PC-9 (cell line): ENCODE measurements at regions of chr5 and their contacts with region 1.

Region 1: GRCh38 chr5:134063188-134063820 is 51.2 kb upstream of the TCF7 start:
- DNase-seq: no peak
- H3K4me3 ChIP-seq: no peak overlapping the region
- H3K27ac ChIP-seq: no peak overlapping the region
- H3K4me1 ChIP-seq: peaks cover 20% of the 10 kb centered on the region
- H3K27me3 ChIP-seq: no peaks in the 10 kb centered on the region
- CTCF ChIP-seq: no peak

Region 2: GRCh38 chr5:133602835-133603380 is 460.4 kb before region 1 on chr5:
- CTCF ChIA-PET with region 1: no interaction called
- POLR2A ChIA-PET with region 1: no interaction called
- intact Hi-C with region 1: no loop called
- DNase-seq: no peak
- H3K4me3 ChIP-seq: no peak overlapping the region
- H3K27ac ChIP-seq: no peak overlapping the region
- H3K4me1 ChIP-seq: no peaks in the 10 kb centered on the region
- H3K27me3 ChIP-seq: no peaks in the 10 kb centered on the region
- CTCF ChIP-seq: no peak

Region 3: DNA sequence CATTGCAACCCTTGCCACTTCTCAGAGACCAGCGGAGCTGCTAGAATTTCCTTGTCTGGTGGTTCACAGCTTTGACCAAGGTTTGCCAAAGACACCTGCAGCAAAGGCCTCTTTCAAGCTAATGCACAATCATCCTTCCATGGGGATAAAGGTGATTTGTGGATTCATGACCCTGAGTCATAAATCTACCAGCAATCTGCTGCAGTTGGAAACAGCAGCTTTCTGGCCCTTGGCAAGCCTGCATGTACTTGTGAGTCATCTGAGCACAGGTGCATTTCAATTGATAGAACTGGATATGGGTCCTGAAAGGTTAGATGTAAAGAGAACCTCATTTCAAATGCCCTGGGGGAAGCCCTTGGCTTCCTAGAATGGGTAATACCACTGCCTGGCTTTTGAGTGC is 29.6 kb after region 1 on chr5:
- CTCF ChIA-PET with region 1: no interaction called
- POLR2A ChIA-PET with region 1: no interaction called
- intact Hi-C with region 1: loop called (anchors 2 kb)
- DNase-seq: peak; percentile 70 to 99
- H3K4me3 ChIP-seq: peak overlapping the region; percentile 13; the same call in 1 of the 2 replicates
- H3K27ac ChIP-seq: peak overlapping the region; percentile 93
- H3K4me1 ChIP-seq: peaks cover 47% of the 10 kb centered on the region
- H3K27me3 ChIP-seq: no peaks in the 10 kb centered on the region
- CTCF ChIP-seq: no peak

Region 4: DNA sequence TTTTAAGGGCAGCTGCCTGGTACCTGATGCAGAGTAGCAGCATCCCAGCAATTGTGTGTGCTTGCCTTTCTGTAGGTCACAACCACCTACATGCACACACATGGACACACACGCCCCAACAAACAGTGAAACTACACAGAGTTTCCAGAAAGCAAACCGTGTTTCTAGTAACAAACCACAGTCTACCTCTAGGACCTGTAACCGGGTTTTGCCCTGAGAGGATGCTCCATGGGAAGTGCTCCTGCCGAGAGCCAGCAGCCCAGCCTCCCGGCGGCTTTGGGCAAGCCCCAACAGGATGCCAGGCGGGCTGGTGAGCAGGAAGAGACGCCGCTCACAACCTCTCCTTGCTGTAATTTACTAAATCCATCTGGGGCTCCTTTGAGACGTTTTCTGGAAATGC is 47.1 kb after region 1 on chr5:
- CTCF ChIA-PET with region 1: no interaction called
- POLR2A ChIA-PET with region 1: no interaction called
- intact Hi-C with region 1: no loop called
- DNase-seq: no peak
- H3K4me3 ChIP-seq: no peak overlapping the region
- H3K27ac ChIP-seq: no peak overlapping the region
- H3K4me1 ChIP-seq: 0 out of 2 replicates have a peak, but pooled peaks cover 6% of the 10 kb centered on the region
- H3K27me3 ChIP-seq: no peaks in the 10 kb centered on the region
- CTCF ChIP-seq: no peak

Region 5: GRCh38 chr5:134411546-134412266 is 348.4 kb after region 1 on chr5 and contains the start of gene CDKN2AIPNL:
- CTCF ChIA-PET with region 1: no interaction called
- POLR2A ChIA-PET with region 1: no interaction called
- intact Hi-C with region 1: no loop called
- DNase-seq: peak; percentile 65 to 89
- H3K4me3 ChIP-seq: peak within 1 kb of the TSS; percentile 98
- H3K27ac ChIP-seq: no peak within 1 kb of the TSS
- H3K4me1 ChIP-seq: peaks cover 16% of the 10 kb centered on the region
- H3K27me3 ChIP-seq: no peaks in the 10 kb centered on the region
- CTCF ChIP-seq: peak; percentile 60
- total RNA-seq, gene CDKN2AIPNL: 35.3 and 36.1 TPM in 2 replicates